GM10248 (cell line): ENCODE measurements at regions of chr5 and their contacts with region 1.

Region 1: GRCh38 chr5:163580516-163580915 is 75.1 kb downstream of the MAT2B start:
- DNase-seq: no peak
- CTCF ChIP-seq: no peak

Region 2: GRCh38 chr5:163306421-163306820 is 274.1 kb before region 1 on chr5:
- CTCF ChIA-PET with region 1: no interaction called
- POLR2A ChIA-PET with region 1: no interaction called
- DNase-seq: no peak
- CTCF ChIP-seq: peak; percentile 14

Region 3: DNA sequence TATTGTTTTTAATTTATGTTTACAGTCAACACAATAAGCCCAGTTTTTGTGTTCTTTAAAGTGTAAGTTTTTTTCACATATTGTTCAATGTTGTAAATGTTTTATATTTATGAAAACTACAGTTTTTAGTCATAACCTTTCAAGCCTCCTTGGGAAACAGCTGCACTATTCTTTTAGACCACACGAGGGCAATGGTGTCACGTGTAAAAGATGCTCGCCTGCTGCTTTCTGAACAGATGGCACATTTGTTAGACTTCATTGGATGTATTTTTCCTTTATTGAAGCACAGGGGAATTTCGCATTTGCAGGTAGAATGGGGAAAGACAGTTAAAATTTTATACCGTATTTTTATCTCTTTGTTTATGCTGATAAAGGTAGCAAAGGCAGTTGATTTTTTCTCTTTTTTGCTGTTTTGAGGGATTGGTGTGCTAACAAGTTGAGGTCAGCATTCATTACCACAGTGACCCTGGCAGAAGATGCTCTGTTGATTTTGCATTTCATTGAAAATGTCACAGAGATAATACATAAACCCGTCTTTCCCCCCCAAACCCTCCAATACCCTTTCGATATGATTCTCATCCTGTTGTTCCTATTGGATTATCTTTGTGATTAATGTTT is 16.1 kb before region 1 on chr5:
- CTCF ChIA-PET with region 1: interaction called, 27 read pairs
- POLR2A ChIA-PET with region 1: no interaction called
- DNase-seq: peak; percentile 55
- CTCF ChIP-seq: peak; percentile 88

Region 4: DNA sequence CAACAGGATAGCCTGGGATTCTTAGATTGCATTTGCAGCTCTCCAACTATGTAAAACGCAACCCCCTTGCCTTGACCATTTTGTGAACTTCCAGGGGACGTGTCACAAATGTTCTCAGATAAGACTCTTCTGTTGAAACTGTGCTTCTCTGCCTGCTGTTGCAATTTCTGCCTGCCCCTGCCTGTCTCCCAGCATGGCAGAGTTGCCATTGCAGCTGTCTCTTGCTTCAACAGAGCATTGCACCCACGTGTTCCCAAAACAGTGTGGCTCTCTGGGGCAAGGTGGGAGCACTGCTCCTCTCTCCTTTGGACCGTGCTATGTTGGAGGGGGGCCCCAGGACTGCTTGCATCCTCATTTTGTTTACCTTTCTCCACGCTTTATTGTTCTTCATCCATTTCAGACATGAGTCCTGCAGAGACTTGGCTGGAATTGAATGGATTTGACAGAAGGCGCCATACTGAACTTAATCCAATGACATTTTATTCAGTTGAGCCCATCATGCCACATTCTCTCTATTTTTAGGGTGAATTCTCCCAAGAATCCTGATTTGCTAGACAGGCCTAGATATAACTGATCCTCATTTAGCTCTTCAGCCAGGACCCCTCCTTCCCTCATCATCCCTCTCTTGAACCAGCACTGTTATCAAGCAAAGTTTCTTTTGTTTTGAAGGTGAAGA is 15.6 kb after region 1 on chr5:
- CTCF ChIA-PET with region 1: no interaction called
- POLR2A ChIA-PET with region 1: no interaction called
- DNase-seq: no peak
- CTCF ChIP-seq: no peak